Ovary (tissue), 10 donors: ENCODE measurements at regions of chr12 and their contacts with region 1.

Region 1: GRCh38 chr12:9925708-9926393 is 6.3 kb downstream of the CLEC2A start:
- DNase-seq: no peak
- H3K4me3 ChIP-seq: no peak overlapping the region
- H3K27ac ChIP-seq: no peak overlapping the region
- H3K4me1 ChIP-seq: no peaks in the 10 kb centered on the region
- H3K27me3 ChIP-seq: no peaks in the 10 kb centered on the region
- CTCF ChIP-seq: peak; percentile 40 to 58 (median 41)
- EP300 ChIP-seq: no peak
- POLR2A ChIP-seq: no peak

Region 2: DNA sequence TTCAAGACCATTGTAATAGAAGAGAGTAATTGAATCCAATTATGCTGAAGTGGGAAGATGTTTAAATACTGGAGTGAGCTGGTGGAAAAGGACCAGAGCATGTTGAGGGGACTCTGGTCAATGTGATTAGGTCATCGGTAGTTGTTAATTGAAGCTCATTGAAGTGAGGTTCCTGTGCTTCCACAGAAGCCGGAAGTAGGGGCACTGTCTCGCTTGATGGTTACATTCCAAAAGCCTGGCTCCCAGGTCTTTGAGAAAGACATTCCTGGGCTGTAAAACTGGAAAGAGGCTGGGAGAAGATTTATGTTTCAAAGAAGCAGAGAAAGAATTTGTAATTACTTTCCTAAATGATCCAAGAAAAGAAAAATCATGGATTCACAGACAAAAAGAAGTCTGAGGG is 180.7 kb before region 1 on chr12:
- intact Hi-C with region 1: loop called in 2 of 4 experiments (anchors 5 kb)
- DNase-seq: no peak
- H3K4me3 ChIP-seq: no peak overlapping the region
- H3K27ac ChIP-seq: no peak overlapping the region
- H3K4me1 ChIP-seq: no peaks in the 10 kb centered on the region
- H3K27me3 ChIP-seq: no peaks in the 10 kb centered on the region
- CTCF ChIP-seq: no peak
- EP300 ChIP-seq: no peak
- POLR2A ChIP-seq: no peak

Region 3: GRCh38 chr12:9813821-9814809 is 111.7 kb before region 1 on chr12:
- intact Hi-C with region 1: loop called in 1 of 4 experiments (anchors 10 kb)
- DNase-seq: peak; percentile 39 to 70 (median 46)
- H3K4me3 ChIP-seq: no peak overlapping the region
- H3K27ac ChIP-seq: no peak overlapping the region
- H3K4me1 ChIP-seq: no peaks in the 10 kb centered on the region
- H3K27me3 ChIP-seq: no peaks in the 10 kb centered on the region
- CTCF ChIP-seq: peak in 1 of 3 donors; percentile 50
- EP300 ChIP-seq: no peak
- POLR2A ChIP-seq: no peak

Region 4: DNA sequence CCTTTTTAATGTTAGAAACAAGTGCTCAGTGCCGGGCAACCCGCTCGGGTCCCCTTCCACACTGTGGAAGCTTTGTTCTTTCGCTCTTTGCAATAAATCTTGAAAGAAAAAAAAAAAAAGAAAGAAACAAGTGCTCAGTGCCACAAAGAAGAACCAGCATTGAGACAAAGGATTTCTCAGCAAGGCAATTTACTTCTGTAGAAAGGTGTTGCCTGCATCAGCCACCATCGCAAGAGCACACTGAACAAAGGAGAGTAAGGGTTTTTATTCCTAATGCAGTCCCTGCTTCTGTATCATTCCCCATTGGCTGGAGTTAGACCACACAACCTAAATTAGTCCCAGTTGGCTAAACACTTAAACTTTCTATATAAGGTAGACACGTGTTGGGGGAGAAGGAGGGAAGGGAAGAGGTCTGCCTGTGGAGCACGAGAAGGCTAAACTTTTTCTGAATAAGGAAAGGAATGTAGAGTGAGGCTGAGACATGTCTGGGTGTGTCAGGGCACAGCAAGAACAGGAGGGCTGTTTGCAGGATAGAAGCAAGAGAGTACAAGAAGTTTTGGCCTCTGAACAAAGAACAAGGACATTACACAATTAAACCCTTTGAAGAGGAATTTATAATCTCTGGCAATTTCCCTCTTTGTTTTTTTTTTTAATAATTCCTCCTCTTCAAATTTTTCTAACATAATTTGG is 23.2 kb before region 1 on chr12:
- intact Hi-C with region 1: no loop called
- DNase-seq: no peak
- H3K4me3 ChIP-seq: no peak overlapping the region
- H3K27ac ChIP-seq: no peak overlapping the region
- H3K4me1 ChIP-seq: no peaks in the 10 kb centered on the region
- H3K27me3 ChIP-seq: no peaks in the 10 kb centered on the region
- CTCF ChIP-seq: no peak
- EP300 ChIP-seq: no peak
- POLR2A ChIP-seq: no peak